Activated T-helper 1 cell treated with anti-CD3 and anti-CD28 coated beads, Interleukin-12 subunit alpha, Interleukin-12 subunit beta, Interleukin-2, Interleukin-4 antibody, amounts not matched to agents 30 ng/mL and 10 ng/mL and 1 ng/mL, durations not matched to agents 14 hours and 24 hours and 36 hours (primary cell): ENCODE measurements at regions of chr12 and their contacts with region 1.

Region 1: GRCh38 chr12:116236148-116236731 is 41.3 kb downstream of the MED13L start:
- DNase-seq: peak; percentile 33
- H3K4me3 Mint-ChIP-seq: no peak overlapping the region
- H3K27ac Mint-ChIP-seq: peak overlapping the region; percentile 2
- H3K4me1 Mint-ChIP-seq: peaks cover 21% of the 10 kb centered on the region
- H3K27me3 Mint-ChIP-seq: no peaks in the 10 kb centered on the region

Region 2: DNA sequence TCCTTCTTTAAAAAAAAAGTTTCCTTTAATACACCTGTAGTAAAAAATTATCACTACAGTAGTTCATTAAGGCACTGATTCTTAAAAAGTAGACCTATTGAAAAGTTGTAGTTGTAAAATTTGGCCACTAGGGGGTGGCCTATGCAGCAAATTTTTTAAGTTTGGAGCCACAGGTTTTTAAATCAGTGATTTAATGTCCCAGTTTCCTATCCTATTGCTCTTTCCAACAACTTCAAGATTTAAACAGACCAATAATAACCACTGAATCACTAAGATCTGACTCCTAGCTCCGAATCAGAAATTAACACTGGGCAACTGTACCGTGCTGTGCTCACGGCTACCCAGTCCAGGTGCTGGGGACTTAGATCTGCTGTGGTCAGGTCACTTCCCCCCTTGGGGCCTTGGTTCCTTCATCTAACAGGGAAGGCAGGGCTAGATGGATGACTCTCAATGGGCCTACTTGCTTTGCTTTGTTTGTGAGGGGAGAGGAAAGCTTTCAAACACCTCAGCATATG is 238.1 kb before region 1 on chr12:
- intact Hi-C with region 1: loop called (anchors 2 kb)
- DNase-seq: no peak
- H3K4me3 Mint-ChIP-seq: no peak overlapping the region
- H3K27ac Mint-ChIP-seq: no peak overlapping the region
- H3K4me1 Mint-ChIP-seq: no peaks in the 10 kb centered on the region
- H3K27me3 Mint-ChIP-seq: no peaks in the 10 kb centered on the region

Region 3: GRCh38 chr12:116015525-116015924 is 220.7 kb before region 1 on chr12:
- intact Hi-C with region 1: loop called (anchors 1 kb)
- DNase-seq: no peak
- H3K4me3 Mint-ChIP-seq: no peak overlapping the region
- H3K27ac Mint-ChIP-seq: no peak overlapping the region
- H3K4me1 Mint-ChIP-seq: peaks cover 7% of the 10 kb centered on the region
- H3K27me3 Mint-ChIP-seq: no peaks in the 10 kb centered on the region

Region 4: GRCh38 chr12:116066381-116067230 is 169.6 kb before region 1 on chr12:
- intact Hi-C with region 1: loop called (anchors 1 kb)
- DNase-seq: peak; percentile 30
- H3K4me3 Mint-ChIP-seq: no peak overlapping the region
- H3K27ac Mint-ChIP-seq: no peak overlapping the region
- H3K4me1 Mint-ChIP-seq: peaks cover 17% of the 10 kb centered on the region
- H3K27me3 Mint-ChIP-seq: no peaks in the 10 kb centered on the region

Region 5: GRCh38 chr12:116142936-116143898 is 93.0 kb before region 1 on chr12:
- intact Hi-C with region 1: loop called (anchors 1 kb)
- DNase-seq: no peak
- H3K4me3 Mint-ChIP-seq: peak overlapping the region; percentile 45
- H3K27ac Mint-ChIP-seq: peak overlapping the region; percentile 81
- H3K4me1 Mint-ChIP-seq: peaks cover 52% of the 10 kb centered on the region
- H3K27me3 Mint-ChIP-seq: no peaks in the 10 kb centered on the region

Region 6: DNA sequence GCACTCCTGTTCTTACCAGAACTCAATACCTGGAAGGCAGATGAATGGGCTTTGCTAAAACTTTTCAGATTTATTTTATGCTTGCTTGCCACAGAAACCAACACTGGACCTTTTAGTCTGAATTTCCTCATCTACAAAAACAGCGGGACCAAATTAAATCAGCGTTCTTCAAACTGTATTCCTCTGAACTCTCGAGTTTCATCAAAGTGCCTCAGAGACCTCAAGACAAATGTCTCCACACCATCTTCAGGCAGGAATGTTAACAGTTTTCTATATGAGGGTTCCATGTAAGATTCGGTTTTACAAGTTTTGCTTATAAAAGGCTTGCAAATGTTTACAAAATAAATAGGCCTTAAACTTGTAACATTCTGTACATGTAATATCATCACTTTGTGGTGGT is 33.3 kb before region 1 on chr12:
- intact Hi-C with region 1: loop called (anchors 5 kb)
- DNase-seq: no peak
- H3K4me3 Mint-ChIP-seq: no peak overlapping the region
- H3K27ac Mint-ChIP-seq: no peak overlapping the region
- H3K4me1 Mint-ChIP-seq: peaks cover 23% of the 10 kb centered on the region
- H3K27me3 Mint-ChIP-seq: no peaks in the 10 kb centered on the region